PC-3 (cell line): ENCODE measurements at regions of chr17 and their contacts with region 1.

Region 1: DNA sequence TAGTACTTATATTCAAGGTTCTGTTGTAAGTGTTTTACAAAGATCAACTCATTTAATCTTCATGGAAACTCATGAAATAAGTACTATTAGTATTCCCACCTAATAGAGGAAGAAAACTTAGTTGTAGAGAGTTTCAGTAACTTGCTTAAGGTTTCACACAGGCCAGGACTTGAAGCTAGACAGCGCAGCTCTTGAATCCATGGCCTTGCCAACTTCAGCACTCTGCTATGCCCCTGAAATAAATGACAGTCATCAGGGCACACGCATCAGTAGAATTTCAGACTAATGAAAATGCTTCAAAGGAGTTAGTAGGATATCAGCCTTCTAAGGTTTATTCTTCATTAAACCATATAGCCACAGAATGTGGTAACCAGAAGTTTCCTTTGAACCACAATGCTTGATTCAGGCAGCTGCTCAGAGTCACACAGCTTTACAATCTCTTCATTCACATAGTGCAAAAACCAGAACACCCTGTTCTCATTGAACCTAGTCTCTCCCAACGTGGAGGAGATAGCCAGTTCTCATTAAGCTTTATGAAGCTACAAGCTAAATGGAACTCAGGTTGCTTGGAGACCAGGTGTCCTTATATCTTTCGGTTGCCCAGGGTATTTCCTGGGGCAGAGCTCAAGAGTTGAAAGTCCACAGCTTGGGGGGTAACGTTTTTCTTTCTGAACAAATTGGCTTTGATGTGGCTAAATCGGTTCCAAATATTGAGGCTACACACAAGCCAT is 39.7 kb downstream of the KCNJ2 start:
- DNase-seq: no peak
- ATAC-seq: no peak
- H3K4me3 ChIP-seq: no peak overlapping the region
- H3K27ac ChIP-seq: no peak overlapping the region
- H3K4me1 ChIP-seq: no peaks in the 10 kb centered on the region
- H3K27me3 ChIP-seq: 0 out of 2 replicates have a peak, but pooled peaks cover 9% of the 10 kb centered on the region
- CTCF ChIP-seq: no peak

Region 2: DNA sequence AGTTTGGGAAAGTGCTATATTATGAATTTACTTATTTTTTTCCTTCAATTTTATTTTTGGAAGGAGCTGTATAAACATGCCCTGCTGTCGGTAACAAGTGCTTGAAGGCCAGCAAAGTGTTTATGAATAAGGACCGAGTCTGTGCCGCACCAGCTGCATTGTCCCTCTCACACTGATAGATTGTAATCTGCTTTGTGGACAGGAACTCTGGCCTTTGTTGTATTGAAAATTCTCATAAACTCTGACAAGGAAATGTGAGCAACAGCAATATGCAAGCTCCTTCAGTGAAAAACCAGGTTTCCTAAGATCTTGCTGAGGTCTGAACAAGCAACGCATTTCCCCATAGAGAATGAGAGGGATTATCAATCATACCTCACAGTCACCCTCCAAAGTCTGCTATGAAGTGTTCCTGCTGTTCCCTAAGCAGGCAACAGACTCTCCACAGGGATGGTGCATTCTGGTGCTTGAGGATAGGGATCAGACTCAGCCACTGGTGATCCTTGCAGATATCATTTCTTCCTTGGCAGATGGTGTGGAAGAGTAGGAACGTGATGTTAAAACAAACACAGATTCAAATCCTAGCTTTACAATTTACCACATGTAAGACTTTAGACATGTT is 70.0 kb after region 1 on chr17:
- CTCF ChIA-PET with region 1: interaction called, 10 read pairs
- POLR2A ChIA-PET with region 1: no interaction called
- intact Hi-C with region 1: no loop called
- DNase-seq: no peak
- ATAC-seq: no peak
- H3K4me3 ChIP-seq: no peak overlapping the region
- H3K27ac ChIP-seq: no peak overlapping the region
- H3K4me1 ChIP-seq: no peaks in the 10 kb centered on the region
- H3K27me3 ChIP-seq: peaks cover 6% of the 10 kb centered on the region; the same call in 1 of the 2 replicates
- CTCF ChIP-seq: no peak